Gastrocnemius medialis (tissue), 4 donors: ENCODE measurements at regions of chr1 and their contacts with region 1.

Region 1: GRCh38 chr1:70354332-70355110 is at the start of gene ANKRD13C:
- DNase-seq: peak; percentile 85 to 93
- ATAC-seq: peak; percentile 98
- H3K4me3 ChIP-seq: peak within 1 kb of the TSS; percentile 85 to 96 (median 92)
- H3K27ac ChIP-seq: peak within 1 kb of the TSS; percentile 93 to 97 (median 96)
- H3K4me1 ChIP-seq: peaks cover 32 to 36% of the 10 kb centered on the region in 2 donors
- H3K27me3 ChIP-seq: no peaks in the 10 kb centered on the region
- CTCF ChIP-seq: no peak
- POLR2A ChIP-seq: peak; percentile 78 to 83
- total RNA-seq, gene ANKRD13C: 9.6 to 13.5 (median 11.1) TPM

Region 2: DNA sequence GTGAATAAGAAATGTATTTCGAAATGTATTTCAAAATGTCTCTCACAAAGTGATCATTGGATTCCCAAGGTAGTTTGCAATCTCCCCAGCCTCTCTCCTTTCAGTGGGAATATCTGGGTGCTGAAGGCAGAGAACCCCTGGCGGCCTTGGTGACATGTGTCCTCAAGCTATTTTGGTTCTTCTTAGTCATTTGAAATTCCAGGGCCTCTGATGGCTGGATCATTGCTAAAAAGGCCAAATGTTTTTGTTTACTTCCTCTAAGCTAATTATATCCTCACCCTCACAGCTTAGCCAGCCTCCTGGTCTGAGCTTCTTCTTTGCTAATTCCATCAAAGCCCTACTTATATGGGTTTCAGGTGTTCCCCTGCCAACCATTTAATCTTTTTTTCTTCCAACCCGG is 220.4 kb before region 1 on chr1:
- in situ Hi-C with region 1: no loop called
- intact Hi-C with region 1: loop called (anchors 5 kb)
- DNase-seq: peak; percentile 39 to 62
- ATAC-seq: peak; percentile 96 to 98
- H3K4me3 ChIP-seq: no peak overlapping the region
- H3K27ac ChIP-seq: peak overlapping the region; percentile 81 to 89 (median 84)
- H3K4me1 ChIP-seq: peaks cover 17 to 21% of the 10 kb centered on the region in 2 donors
- H3K27me3 ChIP-seq: no peaks in the 10 kb centered on the region
- CTCF ChIP-seq: no peak
- POLR2A ChIP-seq: no peak

Region 3: DNA sequence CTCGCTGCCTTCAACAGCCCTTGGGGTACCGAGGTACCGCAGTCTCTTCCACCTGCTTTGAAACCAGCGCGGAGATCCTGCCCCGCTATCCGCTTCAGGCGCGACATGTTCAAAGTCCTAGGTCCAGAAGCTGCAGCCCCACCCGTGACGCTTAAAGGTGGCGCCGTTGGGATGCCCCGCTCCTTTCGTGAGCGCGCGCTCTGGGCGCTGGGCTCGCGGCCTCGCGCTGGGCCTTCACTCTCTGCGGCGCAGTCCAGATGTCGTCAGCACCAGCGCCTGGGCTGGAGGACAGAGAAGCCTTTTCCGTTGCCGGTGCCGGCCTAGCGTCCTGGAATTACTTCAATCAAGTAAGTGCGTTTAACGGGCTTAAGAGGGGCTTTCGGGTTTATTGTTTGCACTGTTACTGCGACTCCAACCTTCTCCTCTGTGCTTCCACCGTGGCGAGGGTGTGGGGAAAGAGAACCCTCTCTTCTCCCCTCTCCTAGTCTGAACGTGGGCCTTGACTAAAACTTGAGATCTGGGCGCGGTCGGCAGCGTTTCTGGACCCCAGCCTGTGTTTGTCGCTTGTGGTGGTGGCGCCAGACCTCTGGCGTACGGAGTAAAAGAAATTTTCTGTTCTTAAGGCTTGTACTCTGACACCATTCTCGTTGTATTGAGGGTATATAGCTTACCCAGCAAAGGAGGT is 148.9 kb before region 1 on chr1 and contains the start of gene LRRC40:
- in situ Hi-C with region 1: no loop called
- intact Hi-C with region 1: loop called (anchors 5 kb)
- DNase-seq: peak; percentile 92 to 94
- ATAC-seq: peak; percentile 97
- H3K4me3 ChIP-seq: peak within 1 kb of the TSS; percentile 71 to 92 (median 82)
- H3K27ac ChIP-seq: peak within 1 kb of the TSS; percentile 88 to 95 (median 92)
- H3K4me1 ChIP-seq: peaks cover 53 to 57% of the 10 kb centered on the region in 2 donors
- H3K27me3 ChIP-seq: no peaks in the 10 kb centered on the region
- CTCF ChIP-seq: no peak
- POLR2A ChIP-seq: peak; percentile 66 to 73
- total RNA-seq, gene LRRC40: 6.5 to 10.5 (median 9.3) TPM

Region 4: GRCh38 chr1:70221241-70222121 is 133.0 kb before region 1 on chr1 and contains the start of gene SRSF11:
- in situ Hi-C with region 1: no loop called
- intact Hi-C with region 1: loop called (anchors 5 kb)
- DNase-seq: peak; percentile 93 to 95
- ATAC-seq: peak; percentile 96 to 97
- H3K4me3 ChIP-seq: peak within 1 kb of the TSS; percentile 68 to 97 (median 82)
- H3K27ac ChIP-seq: peak within 1 kb of the TSS; percentile 92 to 99 (median 96)
- H3K4me1 ChIP-seq: peaks cover 43 to 54% of the 10 kb centered on the region in 2 donors
- H3K27me3 ChIP-seq: no peaks in the 10 kb centered on the region
- CTCF ChIP-seq: peak in 3 of 5 experiments; percentile 13 to 33 (median 20)
- POLR2A ChIP-seq: peak; percentile 88 to 93
- total RNA-seq, gene SRSF11: 42.4 to 135 (median 52.2) TPM

Region 5: GRCh38 chr1:70234733-70235132 is 119.8 kb before region 1 on chr1:
- in situ Hi-C with region 1: no loop called
- intact Hi-C with region 1: no loop called
- DNase-seq: no peak
- ATAC-seq: no peak
- H3K4me3 ChIP-seq: no peak overlapping the region
- H3K27ac ChIP-seq: no peak overlapping the region
- H3K4me1 ChIP-seq: no peaks in the 10 kb centered on the region
- H3K27me3 ChIP-seq: no peaks in the 10 kb centered on the region
- CTCF ChIP-seq: no peak
- POLR2A ChIP-seq: no peak

Region 6: GRCh38 chr1:70334436-70334835 is 20.1 kb before region 1 on chr1:
- in situ Hi-C with region 1: no loop called
- intact Hi-C with region 1: loop called (anchors 1 kb)
- DNase-seq: no peak
- ATAC-seq: no peak
- H3K4me3 ChIP-seq: no peak overlapping the region
- H3K27ac ChIP-seq: no peak overlapping the region
- H3K4me1 ChIP-seq: peaks cover 2 to 4% of the 10 kb centered on the region in 2 donors
- H3K27me3 ChIP-seq: no peaks in the 10 kb centered on the region
- CTCF ChIP-seq: no peak
- POLR2A ChIP-seq: no peak

Region 7: GRCh38 chr1:70410604-70411359 is 56.3 kb after region 1 on chr1 and contains the start of gene CTH:
- in situ Hi-C with region 1: loop called in 3 of 4 experiments (anchors 5 kb)
- intact Hi-C with region 1: loop called (anchors 1 kb)
- DNase-seq: peak; percentile 97
- ATAC-seq: peak; percentile 92 to 95
- H3K4me3 ChIP-seq: peak within 1 kb of the TSS; percentile 67 to 85 (median 82)
- H3K27ac ChIP-seq: peak within 1 kb of the TSS; percentile 87 to 98 (median 97)
- H3K4me1 ChIP-seq: peaks cover 14 to 19% of the 10 kb centered on the region in 2 donors
- H3K27me3 ChIP-seq: no peaks in the 10 kb centered on the region
- CTCF ChIP-seq: peak in 1 of 5 experiments; percentile 18
- POLR2A ChIP-seq: peak; percentile 95 to 97
- total RNA-seq, gene CTH: 1.3 to 6.9 (median 2.5) TPM